HEK293 (cell line): ENCODE measurements at regions of chr9 and their contacts with region 1.

Region 1: GRCh38 chr9:4366591-4367330 is 66.9 kb upstream of the GLIS3 start:
- H3K4me3 ChIP-seq: no peak overlapping the region
- H3K27ac ChIP-seq: no peak overlapping the region
- H3K4me1 ChIP-seq: no peaks in the 10 kb centered on the region
- CTCF ChIP-seq: 0 out of 2 replicates have a peak, but pooled peaks have one; percentile 40

Region 2: GRCh38 chr9:3732077-3733038 is 634.4 kb before region 1 on chr9:
- CTCF ChIA-PET with region 1: interaction called, 29 read pairs
- POLR2A ChIA-PET with region 1: no interaction called
- H3K4me3 ChIP-seq: no peak overlapping the region
- H3K27ac ChIP-seq: no peak overlapping the region
- H3K4me1 ChIP-seq: no peaks in the 10 kb centered on the region
- CTCF ChIP-seq: peak; percentile 28; the same call in 1 of the 2 replicates

Region 3: GRCh38 chr9:4197548-4197947 is 169.2 kb before region 1 on chr9:
- CTCF ChIA-PET with region 1: no interaction called
- POLR2A ChIA-PET with region 1: no interaction called
- H3K4me3 ChIP-seq: no peak overlapping the region
- H3K27ac ChIP-seq: no peak overlapping the region
- H3K4me1 ChIP-seq: no peaks in the 10 kb centered on the region
- CTCF ChIP-seq: 0 out of 2 replicates have a peak, but pooled peaks have one; percentile 27

Region 4: GRCh38 chr9:4315582-4316215 is 51.1 kb before region 1 on chr9:
- CTCF ChIA-PET with region 1: interaction called, 95 read pairs
- POLR2A ChIA-PET with region 1: no interaction called
- H3K4me3 ChIP-seq: no peak overlapping the region
- H3K27ac ChIP-seq: no peak overlapping the region
- H3K4me1 ChIP-seq: no peaks in the 10 kb centered on the region
- CTCF ChIP-seq: peak; percentile 54; the same call in 1 of the 2 replicates

Region 5: DNA sequence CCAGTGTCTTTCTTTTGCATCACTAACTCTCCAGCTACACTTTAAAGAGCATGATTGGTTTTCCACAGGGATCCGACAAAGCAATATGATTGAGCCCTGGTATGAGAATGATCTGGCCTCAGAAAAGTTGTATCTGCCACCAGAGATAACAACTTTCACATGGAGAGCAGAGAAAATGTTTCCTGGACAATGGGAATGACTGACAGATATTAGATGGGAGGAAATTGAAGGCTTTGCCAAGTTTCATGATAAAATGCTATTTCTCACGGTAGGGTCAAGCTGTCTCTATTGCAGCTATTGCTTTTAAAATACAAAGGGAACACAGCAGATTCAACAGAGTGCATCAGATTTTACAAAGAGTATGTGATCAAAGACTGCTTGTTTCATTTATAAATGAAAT is 10.5 kb before region 1 on chr9:
- CTCF ChIA-PET with region 1: interaction called, 28 read pairs
- POLR2A ChIA-PET with region 1: no interaction called
- H3K4me3 ChIP-seq: no peak overlapping the region
- H3K27ac ChIP-seq: no peak overlapping the region
- H3K4me1 ChIP-seq: no peaks in the 10 kb centered on the region
- CTCF ChIP-seq: no peak

Region 6: DNA sequence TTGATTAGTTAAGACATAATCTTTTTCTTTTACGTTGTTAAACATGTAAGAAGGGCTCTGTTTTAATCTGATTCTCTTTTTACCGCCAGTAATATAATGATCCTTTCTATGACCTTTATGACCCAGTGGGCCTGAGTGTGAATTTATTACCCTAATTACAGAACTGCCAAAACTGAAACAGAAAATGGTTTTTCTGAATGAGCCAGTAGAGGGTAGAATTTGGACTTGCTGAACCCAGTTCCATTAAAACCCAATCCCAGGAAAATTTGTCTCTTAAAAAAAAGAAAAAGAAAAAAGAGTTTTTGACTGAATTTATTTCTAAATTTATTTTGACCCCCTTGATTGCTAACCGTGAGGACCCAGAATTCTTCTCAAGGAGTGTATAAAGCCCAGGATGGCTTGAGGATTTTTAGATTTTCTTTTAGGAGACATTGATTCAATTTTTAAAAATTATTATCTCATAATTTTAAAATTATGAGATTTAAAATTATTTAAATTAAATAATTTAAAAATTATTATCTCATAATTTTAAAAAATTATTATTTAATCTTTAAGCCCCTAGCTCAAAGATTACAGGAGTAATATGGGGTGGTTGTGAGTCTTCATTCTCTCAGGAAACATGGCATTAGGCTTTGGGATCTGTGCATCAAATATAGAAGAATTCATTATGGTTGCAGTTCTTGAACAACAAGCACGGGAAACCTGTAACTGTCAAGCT is 27.2 kb after region 1 on chr9:
- CTCF ChIA-PET with region 1: no interaction called
- POLR2A ChIA-PET with region 1: no interaction called
- H3K4me3 ChIP-seq: no peak overlapping the region
- H3K27ac ChIP-seq: no peak overlapping the region
- H3K4me1 ChIP-seq: no peaks in the 10 kb centered on the region
- CTCF ChIP-seq: no peak

Region 7: DNA sequence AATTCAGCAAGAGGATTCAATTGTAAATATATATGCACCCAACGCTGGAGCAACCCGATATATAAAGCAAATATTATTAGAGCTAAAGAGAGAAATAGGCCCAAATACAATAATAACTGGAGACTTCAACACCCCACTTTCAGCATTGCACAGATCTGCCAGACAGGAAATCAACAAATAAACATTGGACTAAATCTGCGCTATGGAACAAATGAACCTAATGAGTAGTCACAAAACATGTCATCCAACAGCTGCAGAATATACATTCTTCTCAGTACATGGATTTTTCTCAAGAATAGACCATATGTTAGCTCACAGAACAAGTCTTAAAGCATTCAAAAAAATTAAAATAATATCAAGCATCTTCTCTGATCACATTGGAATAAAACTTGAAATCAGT is 37.4 kb after region 1 on chr9:
- CTCF ChIA-PET with region 1: no interaction called
- POLR2A ChIA-PET with region 1: no interaction called
- H3K4me3 ChIP-seq: no peak overlapping the region
- H3K27ac ChIP-seq: no peak overlapping the region
- H3K4me1 ChIP-seq: no peaks in the 10 kb centered on the region
- CTCF ChIP-seq: no peak

Region 8: GRCh38 chr9:4596165-4596922 is 229.6 kb after region 1 on chr9:
- CTCF ChIA-PET with region 1: no interaction called
- POLR2A ChIA-PET with region 1: no interaction called
- H3K4me3 ChIP-seq: no peak overlapping the region
- H3K27ac ChIP-seq: no peak overlapping the region
- H3K4me1 ChIP-seq: peaks cover 2% of the 10 kb centered on the region; the same call in 1 of the 2 replicates
- CTCF ChIP-seq: no peak